ENCODE measurements at regions of chr4 and their contacts with region 1.

Region 1: GRCh38 chr4:36930562-36931111 is 313.9 kb upstream of the NWD2 start:
- DNase-seq: no peak
- ATAC-seq: no peak
- H3K4me3 ChIP-seq: no peak overlapping the region
- H3K27ac ChIP-seq: no peak overlapping the region
- H3K4me1 ChIP-seq: no peaks in the 10 kb centered on the region
- H3K27me3 ChIP-seq: no peaks in the 10 kb centered on the region
- CTCF ChIP-seq: no peak

Region 2: GRCh38 chr4:36979533-36979932 is 48.9 kb after region 1 on chr4:
- intact Hi-C with region 1: loop called in 1 of 10 experiments (anchors 1 kb)
- DNase-seq: no peak
- ATAC-seq: no peak
- H3K4me3 ChIP-seq: no peak overlapping the region
- H3K27ac ChIP-seq: no peak overlapping the region
- H3K4me1 ChIP-seq: no peaks in the 10 kb centered on the region
- H3K27me3 ChIP-seq: no peaks in the 10 kb centered on the region
- CTCF ChIP-seq: no peak

Region 3: GRCh38 chr4:37138019-37138653 is 207.5 kb after region 1 on chr4:
- intact Hi-C with region 1: no loop called
- DNase-seq: no peak
- ATAC-seq: no peak
- H3K4me3 ChIP-seq: no peak overlapping the region
- H3K27ac ChIP-seq: no peak overlapping the region
- H3K4me1 ChIP-seq: no peaks in the 10 kb centered on the region
- H3K27me3 ChIP-seq: no peaks in the 10 kb centered on the region
- CTCF ChIP-seq: no peak